Colonic mucosa (tissue), 4 donors: ENCODE measurements at regions of chr9 and their contacts with region 1.

Region 1: GRCh38 chr9:72526901-72527800 is 5.7 kb downstream of the TMC1 start:
- DNase-seq: peak; percentile 61
- H3K4me3 ChIP-seq: peak overlapping the region; percentile 14
- H3K27ac ChIP-seq: peak overlapping the region; percentile 55
- H3K4me1 ChIP-seq: peaks cover 7% of the 10 kb centered on the region
- H3K27me3 ChIP-seq: no peaks in the 10 kb centered on the region
- CTCF ChIP-seq: no peak

Region 2: GRCh38 chr9:72577212-72577753 is 50.1 kb after region 1 on chr9:
- intact Hi-C with region 1: loop called (anchors 10 kb)
- DNase-seq: no peak
- H3K4me3 ChIP-seq: no peak overlapping the region
- H3K27ac ChIP-seq: peak overlapping the region; percentile 62
- H3K4me1 ChIP-seq: no peaks in the 10 kb centered on the region
- H3K27me3 ChIP-seq: no peaks in the 10 kb centered on the region
- CTCF ChIP-seq: no peak

Region 3: GRCh38 chr9:72599879-72600534 is 72.9 kb after region 1 on chr9:
- intact Hi-C with region 1: loop called (anchors 5 kb)
- DNase-seq: no peak
- H3K4me3 ChIP-seq: no peak overlapping the region
- H3K27ac ChIP-seq: no peak overlapping the region
- H3K4me1 ChIP-seq: no peaks in the 10 kb centered on the region
- H3K27me3 ChIP-seq: no peaks in the 10 kb centered on the region
- CTCF ChIP-seq: no peak